Head of caudate nucleus (tissue), 42 donors: ENCODE measurements at regions of chr19 and their contacts with region 1.

Region 1: GRCh38 chr19:33373701-33374421 is at the start of gene CEBPG:
- DNase-seq: peak in 15 of 42 donors; percentile 19 to 72 (median 44)

Region 2: GRCh38 chr19:33302175-33302973 is 71.5 kb before region 1 on chr19 and contains the start of gene CEBPA:
- intact Hi-C with region 1: loop called (anchors 5 kb)
- DNase-seq: peak in 41 of 42 donors; percentile 23 to 92 (median 79)